MCF 10A (cell line): ENCODE measurements at regions of chr1 and their contacts with region 1.

Region 1: GRCh38 chr1:39105061-39105840 is 79.1 kb downstream of the NDUFS5 start:
- DNase-seq: peak; percentile 74
- H3K4me3 Mint-ChIP-seq: no peak overlapping the region
- H3K27ac Mint-ChIP-seq: no peak overlapping the region
- H3K4me1 Mint-ChIP-seq: peaks cover 34% of the 10 kb centered on the region
- H3K27me3 Mint-ChIP-seq: no peaks in the 10 kb centered on the region
- CTCF ChIP-seq: no peak

Region 2: DNA sequence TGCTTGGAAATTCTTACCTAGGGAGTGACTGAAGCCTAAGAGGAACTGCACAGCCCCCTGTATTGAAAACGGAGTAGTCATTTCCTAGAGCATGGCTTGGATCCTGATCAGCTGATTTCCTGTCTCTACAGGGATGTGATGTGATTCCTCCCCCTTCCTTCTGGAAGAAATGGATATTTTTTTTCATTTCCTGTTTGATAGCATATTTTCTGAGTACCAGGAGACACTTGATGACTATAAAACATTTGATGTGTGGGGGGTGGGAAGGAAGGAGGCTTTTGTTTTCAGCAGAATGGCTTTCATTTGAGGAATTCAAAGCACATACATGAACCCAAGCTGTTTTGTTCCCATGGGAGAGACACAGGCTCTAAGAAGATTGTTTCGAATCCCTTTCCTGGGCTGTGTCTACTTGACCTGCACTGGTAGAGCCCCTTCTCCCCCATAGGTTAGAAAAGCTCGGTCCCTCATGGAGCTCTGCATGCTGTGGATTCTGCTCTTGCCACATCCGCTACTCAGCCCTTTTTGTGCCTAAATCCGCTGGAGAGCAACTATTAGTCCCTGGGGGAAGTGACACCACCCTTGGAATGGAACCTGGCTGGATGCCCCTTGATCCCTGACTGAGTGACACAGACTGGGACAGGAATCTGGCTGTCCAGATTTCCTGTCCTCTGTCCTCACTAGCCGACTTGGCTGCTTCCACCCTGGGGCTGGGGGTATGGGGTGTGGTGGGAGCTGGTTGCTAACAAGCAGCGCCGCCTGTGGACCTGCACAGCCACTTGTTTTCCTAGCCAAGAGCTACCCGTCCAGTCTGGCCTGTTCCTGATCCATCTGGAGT is 27.5 kb after region 1 on chr1:
- CTCF ChIA-PET with region 1: interaction called, 13 read pairs
- POLR2A ChIA-PET with region 1: interaction called, 427 read pairs
- intact Hi-C with region 1: no loop called
- DNase-seq: peak; percentile 77
- H3K4me3 Mint-ChIP-seq: peak overlapping the region; percentile 10
- H3K27ac Mint-ChIP-seq: peak overlapping the region; percentile 85
- H3K4me1 Mint-ChIP-seq: peaks cover 52% of the 10 kb centered on the region
- H3K27me3 Mint-ChIP-seq: no peaks in the 10 kb centered on the region
- CTCF ChIP-seq: peak; percentile 14

Region 3: GRCh38 chr1:39158327-39159086 is 53.3 kb after region 1 on chr1:
- CTCF ChIA-PET with region 1: interaction called, 6 read pairs
- POLR2A ChIA-PET with region 1: interaction called, 21 read pairs
- intact Hi-C with region 1: no loop called
- DNase-seq: peak; percentile 49
- H3K4me3 Mint-ChIP-seq: peak overlapping the region; percentile 70
- H3K27ac Mint-ChIP-seq: peak overlapping the region; percentile 82
- H3K4me1 Mint-ChIP-seq: peaks cover 59% of the 10 kb centered on the region
- H3K27me3 Mint-ChIP-seq: no peaks in the 10 kb centered on the region
- CTCF ChIP-seq: no peak

Region 4: DNA sequence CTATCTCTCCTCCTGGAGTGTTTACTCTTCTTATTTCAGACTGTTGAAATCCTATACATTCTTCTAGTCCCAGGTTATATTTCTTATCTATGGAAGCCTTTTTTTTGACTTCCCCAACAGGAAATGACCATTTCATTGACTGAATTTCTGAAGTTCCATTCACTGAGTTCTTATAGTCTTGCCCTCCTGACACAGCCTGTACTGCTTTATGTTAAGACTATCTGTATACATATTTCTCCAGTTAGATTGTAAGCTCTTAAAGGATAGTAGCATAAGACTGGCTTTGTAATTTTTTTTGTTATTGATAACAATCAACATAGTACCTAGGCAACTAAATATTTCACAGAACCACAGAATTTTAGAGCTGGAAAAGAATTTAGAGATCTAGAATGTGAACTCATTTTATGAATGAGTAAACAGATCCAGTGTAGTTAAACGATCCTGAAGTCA is 84.4 kb after region 1 on chr1:
- CTCF ChIA-PET with region 1: interaction called, 75 read pairs
- POLR2A ChIA-PET with region 1: interaction called, 327 read pairs
- intact Hi-C with region 1: loop called (anchors 1 kb)
- DNase-seq: no peak
- H3K4me3 Mint-ChIP-seq: no peak overlapping the region
- H3K27ac Mint-ChIP-seq: peak overlapping the region; percentile 96
- H3K4me1 Mint-ChIP-seq: peaks cover 56% of the 10 kb centered on the region
- H3K27me3 Mint-ChIP-seq: no peaks in the 10 kb centered on the region
- CTCF ChIP-seq: no peak